Posterior vena cava (tissue), 2 donors: ENCODE measurements at regions of chr9 and their contacts with region 1.

Region 1: DNA sequence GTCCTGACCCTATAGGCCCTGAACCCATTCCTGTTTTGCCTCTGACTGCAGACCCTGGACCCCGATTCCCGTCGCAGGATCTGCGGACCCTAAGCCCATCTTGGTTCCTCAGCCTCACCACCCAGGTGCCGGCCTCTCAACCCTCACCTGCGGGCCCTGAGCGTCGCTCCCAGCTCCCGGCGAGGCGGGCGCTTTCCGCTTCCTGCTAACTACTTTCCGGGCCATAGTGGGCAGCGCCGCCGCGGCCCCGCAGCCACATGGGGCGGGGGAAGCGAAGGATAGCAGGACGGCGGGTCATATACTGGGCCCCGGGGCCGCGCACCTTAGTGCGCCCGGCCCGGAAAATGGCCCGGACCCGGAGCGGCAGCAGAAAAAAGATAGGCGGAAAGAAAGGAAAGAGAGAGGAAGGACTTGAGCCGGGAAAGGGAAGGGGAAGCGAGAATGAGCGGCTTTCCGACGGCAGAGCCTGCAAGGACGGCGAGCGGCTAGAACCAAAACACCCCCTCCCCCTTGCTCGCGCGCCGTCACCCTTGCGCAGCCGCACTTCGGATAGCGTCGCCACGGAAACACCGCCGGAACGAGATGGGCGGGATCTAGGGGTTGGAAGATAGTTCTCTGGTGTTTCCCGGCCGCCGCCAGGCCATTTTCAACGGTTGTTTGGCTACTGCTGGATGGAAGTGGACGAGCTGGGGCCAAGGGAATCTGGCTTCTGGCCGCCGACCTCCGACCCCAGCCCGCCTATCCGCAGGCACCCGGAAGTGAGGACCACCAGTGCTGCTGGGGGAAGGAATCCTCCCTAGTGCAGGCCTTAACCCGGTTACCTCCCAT is at the start of gene DCAF12:
- DNase-seq: peak; percentile 98
- total RNA-seq, gene DCAF12: 20.5 to 32.9 TPM

Region 2: GRCh38 chr9:34252670-34253459 is 126.4 kb after region 1 on chr9:
- intact Hi-C with region 1: loop called in 1 of 2 experiments (anchors 10 kb)
- DNase-seq: peak; percentile 86